ENCODE measurements at regions of chr11 and their contacts with region 1.

Region 1: DNA sequence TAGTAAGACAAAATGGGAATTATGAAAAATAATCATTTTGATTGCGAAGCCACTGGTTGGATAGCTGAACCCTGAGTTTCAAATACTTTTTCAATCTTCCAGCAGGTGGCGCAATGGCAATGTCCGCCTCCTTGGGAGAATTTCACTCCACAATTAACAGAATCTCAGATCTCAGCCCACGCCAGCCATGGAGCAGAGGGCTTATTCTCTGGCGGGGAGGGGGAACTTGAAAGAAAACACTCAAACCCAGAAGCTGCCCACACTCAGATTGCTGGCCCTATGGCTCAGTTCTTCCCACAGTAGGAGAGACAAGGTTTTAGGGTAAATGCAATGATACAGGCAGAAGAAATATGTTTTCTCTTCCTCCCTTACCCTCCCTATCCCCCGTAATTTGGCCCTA is 38.7 kb upstream of the RCN1 start:
- DNase-seq: peak; percentile 73
- ATAC-seq: peak; percentile 59

Region 2: DNA sequence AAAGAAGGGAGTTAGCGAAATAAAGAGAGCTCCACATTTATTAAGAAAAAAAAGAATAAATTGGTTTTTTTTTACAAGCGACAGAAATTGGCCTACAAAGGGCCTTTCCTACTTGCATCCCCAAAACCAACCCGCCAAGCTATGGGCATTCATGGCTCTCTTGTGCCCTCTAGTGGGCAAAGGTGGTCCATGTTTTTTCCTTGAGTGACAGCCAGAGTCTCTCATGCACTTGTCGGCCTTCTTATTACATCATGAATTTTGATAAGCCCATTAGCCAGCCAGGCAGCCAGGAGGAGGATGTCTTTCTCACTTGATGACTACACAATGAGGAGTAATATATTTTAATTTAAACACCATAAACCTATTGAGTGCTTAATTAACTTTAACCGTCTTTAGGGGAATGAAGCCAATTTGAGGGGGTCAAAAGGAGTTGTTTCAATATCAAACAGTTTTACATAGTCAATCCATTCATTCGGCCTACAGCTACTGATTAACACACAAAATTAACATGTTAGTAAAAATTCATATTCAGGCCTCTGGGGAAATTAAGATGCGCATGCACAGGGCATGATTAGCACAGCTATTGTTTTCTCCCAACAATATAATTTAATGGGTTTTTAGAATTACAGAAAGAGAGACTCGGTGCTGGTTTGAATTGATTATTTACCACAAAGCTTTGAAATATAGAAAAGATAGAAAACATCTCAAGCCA is 124.2 kb after region 1 on chr11:
- intact Hi-C with region 1: loop called (anchors 5 kb)
- DNase-seq: peak; percentile 88
- ATAC-seq: peak; percentile 71

Region 3: DNA sequence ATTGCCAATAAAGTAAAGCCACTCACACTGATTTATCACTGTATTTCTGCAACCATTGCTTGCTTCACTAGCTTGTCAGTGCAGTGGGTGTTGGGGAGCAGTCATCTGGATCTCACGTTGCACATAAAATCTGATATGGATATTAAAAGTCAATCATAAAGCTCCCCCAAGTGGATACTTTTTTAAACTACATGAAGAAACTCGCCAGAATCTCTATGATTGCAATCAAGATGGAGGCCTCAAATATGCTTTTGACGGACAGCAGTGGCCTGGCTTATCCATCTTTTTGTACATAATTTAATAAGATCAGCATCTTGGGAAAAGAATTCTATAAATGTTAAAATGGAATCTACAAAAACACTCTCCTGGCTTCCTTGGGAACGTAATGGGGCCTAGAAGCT is 245.4 kb after region 1 on chr11:
- intact Hi-C with region 1: loop called (anchors 10 kb)
- DNase-seq: no peak
- ATAC-seq: no peak

Region 4: GRCh38 chr11:32962016-32962415 is 909.8 kb after region 1 on chr11:
- intact Hi-C with region 1: no loop called
- DNase-seq: no peak
- ATAC-seq: no peak

Measured in sciatic nerve (tissue), 2 donors.